ENCODE measurements at regions of chr17 and their contacts with region 1.

Region 1: DNA sequence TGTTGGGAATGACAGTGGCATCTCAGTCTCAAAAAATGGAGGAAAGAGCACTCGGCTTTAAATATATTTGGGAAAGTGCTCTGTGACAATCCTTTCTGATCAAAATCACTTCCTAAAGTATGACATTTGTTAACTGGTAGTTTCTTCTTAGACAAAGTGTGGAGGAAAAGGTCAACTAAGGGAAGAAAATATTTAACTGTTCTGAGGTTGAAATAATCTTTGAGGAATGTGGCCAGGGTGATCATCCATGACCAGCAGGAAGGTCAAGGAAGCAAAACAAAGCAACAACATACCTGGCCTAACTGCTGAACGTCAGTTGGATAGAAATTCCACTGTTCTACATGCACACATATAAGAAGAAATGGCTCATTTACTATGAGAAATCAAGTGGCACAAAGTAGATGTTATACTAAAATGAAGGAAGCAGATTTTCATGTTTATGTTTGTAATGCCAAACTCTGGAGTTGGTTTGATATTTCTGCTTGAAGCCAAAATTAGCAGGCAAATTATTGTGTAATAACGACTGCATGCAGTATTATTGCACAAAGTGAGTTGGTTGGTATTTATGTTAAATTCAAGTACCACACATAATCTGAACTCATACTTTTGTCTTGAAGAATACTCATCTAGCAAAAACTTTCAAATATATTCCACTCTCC is 87.3 kb upstream of the CORO6 start:
- DNase-seq: no peak
- H3K4me3 Mint-ChIP-seq: no peak overlapping the region
- H3K27ac Mint-ChIP-seq: no peak overlapping the region
- H3K4me1 Mint-ChIP-seq: peaks cover 44% of the 10 kb centered on the region
- H3K27me3 Mint-ChIP-seq: no peaks in the 10 kb centered on the region

Region 2: DNA sequence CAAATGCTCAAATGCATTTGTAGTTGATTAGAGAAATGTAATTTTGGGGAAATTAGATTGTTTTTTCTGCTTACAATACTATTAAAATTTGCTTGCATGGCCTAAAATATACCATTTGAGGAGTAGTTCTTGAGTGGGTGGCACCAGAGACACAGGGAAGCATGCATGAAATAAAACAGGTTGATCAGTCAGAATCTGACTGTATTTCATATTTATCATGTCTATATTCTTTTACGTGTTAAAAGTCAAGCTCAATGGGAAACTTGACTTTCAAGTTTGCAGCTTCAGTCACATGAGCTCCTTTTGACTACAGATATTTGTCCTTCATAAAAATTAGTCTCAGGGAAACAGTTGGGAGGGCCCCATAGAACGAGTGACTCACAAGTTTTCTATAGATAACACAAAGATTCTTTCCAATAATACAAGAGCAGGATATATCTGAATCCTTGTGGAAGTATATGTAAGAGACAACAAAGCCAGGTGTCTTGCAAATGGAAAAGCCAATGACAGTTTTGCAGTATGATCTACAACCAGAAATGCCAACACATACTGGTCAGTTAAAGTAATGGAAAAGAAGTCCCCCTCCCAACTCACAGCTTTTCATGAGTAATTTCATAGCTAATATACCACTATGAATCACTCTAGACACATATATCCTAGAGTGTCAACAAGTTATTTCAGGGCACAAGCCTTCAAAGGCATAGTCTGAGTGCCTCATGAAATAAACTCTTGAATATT is 45.1 kb before region 1 on chr17:
- intact Hi-C with region 1: loop called (anchors 2 kb)
- DNase-seq: no peak
- H3K4me3 Mint-ChIP-seq: no peak overlapping the region
- H3K27ac Mint-ChIP-seq: peak overlapping the region; percentile 77
- H3K4me1 Mint-ChIP-seq: peaks cover 31% of the 10 kb centered on the region
- H3K27me3 Mint-ChIP-seq: no peaks in the 10 kb centered on the region

Region 3: DNA sequence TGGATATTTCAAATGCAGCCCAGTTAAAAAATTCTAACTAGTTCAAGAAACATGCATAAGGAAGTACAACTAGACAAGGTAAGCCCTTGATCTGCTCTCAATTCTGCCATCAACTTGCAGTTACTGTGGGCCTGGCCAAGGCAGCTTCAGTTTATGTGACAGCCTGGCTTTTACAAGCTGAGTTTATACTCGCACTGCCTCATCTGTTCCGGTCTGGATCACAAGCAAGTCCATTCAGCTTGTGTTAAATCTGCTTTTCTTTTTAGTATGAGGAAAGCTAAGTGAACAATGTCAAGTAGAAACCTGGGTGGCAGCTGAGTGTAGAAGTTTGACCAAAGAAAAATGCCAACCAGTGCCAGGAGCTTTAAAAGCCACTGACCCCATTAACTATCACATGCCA is 10.7 kb before region 1 on chr17:
- intact Hi-C with region 1: no loop called
- DNase-seq: no peak
- H3K4me3 Mint-ChIP-seq: no peak overlapping the region
- H3K27ac Mint-ChIP-seq: no peak overlapping the region
- H3K4me1 Mint-ChIP-seq: peaks cover 16% of the 10 kb centered on the region
- H3K27me3 Mint-ChIP-seq: no peaks in the 10 kb centered on the region

Region 4: GRCh38 chr17:29722411-29723198 is 12.6 kb after region 1 on chr17:
- intact Hi-C with region 1: loop called (anchors 2 kb)
- DNase-seq: no peak
- H3K4me3 Mint-ChIP-seq: peak overlapping the region; percentile 35
- H3K27ac Mint-ChIP-seq: peak overlapping the region; percentile 57
- H3K4me1 Mint-ChIP-seq: peaks cover 49% of the 10 kb centered on the region
- H3K27me3 Mint-ChIP-seq: no peaks in the 10 kb centered on the region

Region 5: GRCh38 chr17:30323895-30324319 is 613.9 kb after region 1 on chr17:
- intact Hi-C with region 1: no loop called
- DNase-seq: no peak
- H3K4me3 Mint-ChIP-seq: no peak overlapping the region
- H3K27ac Mint-ChIP-seq: no peak overlapping the region
- H3K4me1 Mint-ChIP-seq: peaks cover 13% of the 10 kb centered on the region
- H3K27me3 Mint-ChIP-seq: peaks cover 11% of the 10 kb centered on the region